ENCODE measurements at regions of chr12 and their contacts with region 1.

Region 1: GRCh38 chr12:132887513-132888351 is at the start of gene CHFR:
- DNase-seq: peak; percentile 98
- ATAC-seq: peak; percentile 99
- H3K4me3 ChIP-seq: peak within 1 kb of the TSS; percentile 88
- H3K27ac ChIP-seq: peak within 1 kb of the TSS; percentile 44
- H3K4me1 ChIP-seq: peaks cover 12% of the 10 kb centered on the region; the same call in 1 of the 2 replicates
- H3K27me3 ChIP-seq: no peaks in the 10 kb centered on the region
- CTCF ChIP-seq: no peak
- total RNA-seq, gene CHFR: 23.3 and 25.8 TPM in 2 replicates

Region 2: DNA sequence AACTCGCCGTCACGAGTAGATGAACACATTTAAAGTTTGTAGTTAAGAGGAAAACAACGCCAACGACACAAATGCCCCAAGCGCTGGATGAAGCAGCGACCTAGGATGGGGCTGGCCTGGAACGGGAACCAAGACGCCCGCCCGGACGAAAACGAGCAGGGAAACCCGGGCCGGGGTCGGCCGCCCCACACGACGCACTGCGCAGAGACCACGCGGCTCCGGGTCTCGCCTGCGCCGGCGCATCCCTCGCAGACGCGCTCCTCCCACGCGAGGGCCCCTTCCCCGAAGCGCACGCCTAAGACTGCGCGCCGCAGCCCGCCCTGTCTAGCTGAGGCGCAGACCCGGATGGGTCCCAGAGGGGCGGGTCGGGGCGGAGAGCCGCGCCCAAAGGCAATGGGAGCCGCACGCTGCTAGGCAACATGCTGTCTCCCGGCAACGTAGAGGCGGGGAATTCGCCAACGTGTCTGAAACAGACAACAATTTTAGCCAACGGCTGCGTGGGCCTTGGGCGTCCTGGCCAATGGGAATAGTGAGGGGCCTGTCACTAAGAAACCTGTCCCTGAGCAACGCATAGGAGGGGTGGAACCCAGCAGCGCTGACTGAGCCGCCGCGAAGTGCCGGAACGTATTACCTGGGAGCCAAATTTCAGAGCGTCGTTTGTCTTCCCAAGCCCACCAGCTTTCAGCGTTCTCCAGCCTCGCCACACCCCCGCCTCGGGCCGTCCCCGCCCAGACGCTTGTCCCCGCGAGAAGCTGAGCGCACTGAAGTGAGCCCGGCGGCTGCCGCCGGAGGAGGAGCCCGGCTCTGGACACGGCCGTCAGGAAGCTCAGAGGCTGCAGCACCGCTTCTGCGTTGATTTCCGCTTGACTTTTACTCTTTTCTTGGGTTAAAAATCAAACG is 20.7 kb after region 1 on chr12:
- CTCF ChIA-PET with region 1: no interaction called
- POLR2A ChIA-PET with region 1: no interaction called
- intact Hi-C with region 1: loop called (anchors 1 kb)
- DNase-seq: peak; percentile 100
- ATAC-seq: peak; percentile 97
- H3K4me3 ChIP-seq: peak overlapping the region; percentile 76
- H3K27ac ChIP-seq: peak overlapping the region; percentile 52
- H3K4me1 ChIP-seq: peaks cover 3% of the 10 kb centered on the region; the same call in 1 of the 2 replicates
- H3K27me3 ChIP-seq: no peaks in the 10 kb centered on the region
- CTCF ChIP-seq: no peak